BJ (cell line): ENCODE measurements at regions of chr6 and their contacts with region 1.

Region 1: DNA sequence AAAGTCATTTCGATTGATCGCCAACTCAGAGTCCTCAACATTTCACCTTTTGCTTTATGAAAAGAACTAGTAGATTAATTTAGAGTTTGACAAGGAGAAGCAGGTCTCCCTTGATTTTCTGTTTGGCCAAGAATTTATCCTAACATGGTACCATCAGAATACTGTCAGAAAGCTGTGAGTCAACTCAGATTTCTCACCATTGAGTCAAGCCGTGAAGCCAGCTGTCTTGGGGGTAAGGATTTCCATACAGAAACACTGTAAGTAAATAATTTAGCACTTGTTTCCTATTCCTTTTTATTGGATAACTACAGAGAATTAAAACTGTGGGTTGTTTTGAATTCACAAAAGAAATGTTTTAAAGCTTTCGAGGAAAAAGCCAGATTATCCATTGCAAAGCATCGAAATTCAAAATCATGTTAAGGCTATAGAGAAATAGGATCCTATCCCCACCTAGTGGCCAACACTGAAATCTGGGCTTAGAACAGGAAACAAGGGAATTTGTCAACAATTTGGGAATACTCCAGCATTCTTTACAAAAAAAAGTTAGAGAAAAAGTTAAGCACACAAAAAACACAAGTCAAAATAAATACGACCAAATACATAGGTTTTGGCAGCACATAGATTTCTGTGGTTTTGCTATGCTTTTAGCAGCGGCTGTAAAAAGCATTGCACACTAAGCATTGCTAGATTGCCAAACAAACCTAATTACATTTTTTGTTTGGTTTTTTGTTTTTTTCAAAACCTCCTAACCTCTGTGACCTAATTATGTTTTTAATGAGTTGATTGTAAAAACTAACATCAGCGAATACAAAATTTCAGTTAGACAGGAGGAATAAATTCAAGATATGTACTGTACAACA is 44.2 kb downstream of the COL11A2 start:
- DNase-seq: no peak
- H3K4me3 ChIP-seq: no peak overlapping the region
- H3K27me3 ChIP-seq: peaks cover 4% of the 10 kb centered on the region
- CTCF ChIP-seq: peak; percentile 78

Region 2: DNA sequence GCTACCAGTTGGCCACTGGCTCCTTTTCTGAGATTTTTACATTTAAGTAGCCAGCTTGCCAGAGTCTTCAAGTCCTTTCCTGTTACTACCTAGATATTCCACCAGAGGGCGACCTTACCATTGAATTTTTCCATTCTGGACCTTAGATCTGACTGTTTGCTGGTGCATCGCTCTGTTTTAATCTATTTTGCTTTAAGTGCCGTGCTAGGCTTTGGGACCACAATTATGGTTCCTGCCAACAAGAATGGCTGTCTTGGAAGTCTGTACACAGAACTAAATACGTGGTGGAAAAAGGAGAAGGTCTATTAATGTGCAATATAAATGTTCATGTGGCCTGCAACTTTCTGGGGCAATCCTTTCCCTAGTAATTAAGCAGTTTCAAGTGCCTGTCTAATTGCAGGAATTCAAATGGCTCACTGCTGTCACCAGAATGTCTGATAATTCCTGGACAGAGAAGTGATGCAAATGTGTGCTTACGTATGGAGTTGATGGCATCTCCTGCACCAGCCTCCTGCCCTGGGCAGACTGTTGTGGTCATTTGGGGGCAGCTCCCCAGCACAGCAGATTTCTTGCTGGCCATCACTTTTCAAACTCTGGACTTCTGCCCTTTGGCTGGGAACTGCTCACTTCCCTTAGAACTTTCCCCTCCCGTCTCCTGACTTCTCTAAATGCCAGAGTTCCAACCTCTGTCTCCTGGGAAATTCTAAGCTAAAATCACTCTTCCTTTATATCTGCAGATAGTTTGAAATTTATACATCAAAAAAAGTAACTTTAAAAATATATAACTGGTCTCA is 133.0 kb before region 1 on chr6:
- CTCF ChIA-PET with region 1: interaction called, 10 read pairs
- POLR2A ChIA-PET with region 1: no interaction called
- DNase-seq: peak; percentile 43
- H3K4me3 ChIP-seq: no peak overlapping the region
- H3K27me3 ChIP-seq: peaks cover 26% of the 10 kb centered on the region
- CTCF ChIP-seq: peak; percentile 72

Region 3: GRCh38 chr6:33118525-33119123 is 29.4 kb before region 1 on chr6:
- CTCF ChIA-PET with region 1: interaction called, 17 read pairs
- POLR2A ChIA-PET with region 1: no interaction called
- DNase-seq: no peak
- H3K4me3 ChIP-seq: no peak overlapping the region
- H3K27me3 ChIP-seq: peaks cover 32% of the 10 kb centered on the region
- CTCF ChIP-seq: peak; percentile 65

Region 4: GRCh38 chr6:33126101-33126714 is 21.8 kb before region 1 on chr6:
- CTCF ChIA-PET with region 1: interaction called, 26 read pairs
- POLR2A ChIA-PET with region 1: no interaction called
- DNase-seq: no peak
- H3K4me3 ChIP-seq: no peak overlapping the region
- H3K27me3 ChIP-seq: peaks cover 8% of the 10 kb centered on the region
- CTCF ChIP-seq: peak; percentile 66

Region 5: GRCh38 chr6:33161354-33162331 is 13.6 kb after region 1 on chr6:
- CTCF ChIA-PET with region 1: interaction called, 44 read pairs
- POLR2A ChIA-PET with region 1: no interaction called
- DNase-seq: no peak
- H3K4me3 ChIP-seq: peak overlapping the region; percentile 39
- H3K27me3 ChIP-seq: peaks cover 3% of the 10 kb centered on the region
- CTCF ChIP-seq: peak; percentile 98

Region 6: DNA sequence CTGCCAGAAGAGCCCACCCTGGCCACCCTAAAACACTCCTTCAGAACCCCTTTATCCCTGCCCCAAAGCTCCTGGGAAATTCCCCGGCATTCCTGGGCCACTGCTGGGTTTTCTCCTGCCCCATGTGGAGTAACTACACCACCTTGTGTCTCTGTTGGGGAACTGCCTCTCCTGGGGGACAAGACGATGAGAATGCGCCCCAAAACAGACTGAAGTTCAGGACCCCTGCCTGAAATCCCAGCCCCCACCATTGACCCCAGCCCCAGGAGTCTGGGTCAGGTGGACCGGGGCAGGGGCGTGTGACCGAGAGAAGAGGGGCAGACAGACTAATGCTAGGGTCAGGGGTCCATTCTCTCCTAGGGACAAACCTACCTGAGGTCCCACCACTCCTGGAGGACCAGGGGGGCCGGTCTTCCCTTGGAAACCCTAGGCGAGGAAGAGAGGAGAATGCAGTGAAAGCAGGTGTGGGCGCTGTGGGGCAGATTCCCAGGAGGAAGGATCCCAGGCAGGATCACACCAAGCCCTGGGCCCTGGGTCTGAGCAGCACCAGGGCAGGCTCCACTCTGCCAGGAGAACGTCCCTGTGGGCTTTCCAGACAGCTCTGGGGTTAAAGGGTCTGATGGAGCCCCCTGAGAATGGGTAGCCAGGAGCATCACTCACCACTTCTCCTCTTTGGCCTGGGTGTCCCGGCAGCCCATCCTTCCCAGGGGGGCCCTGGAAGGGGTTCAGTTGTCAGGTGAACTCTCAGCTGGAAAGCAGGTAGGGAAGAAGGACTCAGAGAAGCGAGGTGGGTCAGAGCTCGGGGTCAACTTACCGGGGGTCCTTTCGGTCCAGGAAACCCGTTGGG is 24.9 kb after region 1 on chr6:
- CTCF ChIA-PET with region 1: interaction called, 11 read pairs
- POLR2A ChIA-PET with region 1: no interaction called
- DNase-seq: no peak
- H3K4me3 ChIP-seq: no peak overlapping the region
- H3K27me3 ChIP-seq: peaks cover 3% of the 10 kb centered on the region
- CTCF ChIP-seq: peak; percentile 76